Activated CD4-positive, alpha-beta memory T cell treated with anti-CD3 and anti-CD28 coated beads for 36 hours (primary cell): ENCODE measurements at regions of chr2 and their contacts with region 1.

Region 1: GRCh38 chr2:96344011-96344410 is 8.4 kb downstream of the NCAPH start:
- DNase-seq: peak; percentile 77
- H3K4me3 Mint-ChIP-seq: no peak overlapping the region
- H3K27ac Mint-ChIP-seq: peak overlapping the region; percentile 87
- H3K4me1 Mint-ChIP-seq: peaks cover 67% of the 10 kb centered on the region
- H3K27me3 Mint-ChIP-seq: no peaks in the 10 kb centered on the region

Region 2: GRCh38 chr2:96164459-96165184 is 179.4 kb before region 1 on chr2:
- CTCF ChIA-PET with region 1: no interaction called
- POLR2A ChIA-PET with region 1: no interaction called
- intact Hi-C with region 1: loop called (anchors 5 kb)
- DNase-seq: peak; percentile 90
- H3K4me3 Mint-ChIP-seq: peak overlapping the region; percentile 87
- H3K27ac Mint-ChIP-seq: peak overlapping the region; percentile 100
- H3K4me1 Mint-ChIP-seq: peaks cover 72% of the 10 kb centered on the region
- H3K27me3 Mint-ChIP-seq: no peaks in the 10 kb centered on the region

Region 3: GRCh38 chr2:96208143-96209010 is 135.6 kb before region 1 on chr2 and contains the start of gene STARD7:
- CTCF ChIA-PET with region 1: no interaction called
- POLR2A ChIA-PET with region 1: interaction called, 4 read pairs
- intact Hi-C with region 1: loop called (anchors 5 kb)
- DNase-seq: peak; percentile 99
- H3K4me3 Mint-ChIP-seq: peak within 1 kb of the TSS; percentile 98
- H3K27ac Mint-ChIP-seq: peak within 1 kb of the TSS; percentile 92
- H3K4me1 Mint-ChIP-seq: peaks cover 53% of the 10 kb centered on the region
- H3K27me3 Mint-ChIP-seq: no peaks in the 10 kb centered on the region
- total RNA-seq, gene STARD7: 173 to 181 TPM

Region 4: GRCh38 chr2:96305091-96305978 is 38.7 kb before region 1 on chr2 and contains the start of gene SNRNP200:
- CTCF ChIA-PET with region 1: interaction called, 8 read pairs
- POLR2A ChIA-PET with region 1: interaction called, 5 read pairs
- intact Hi-C with region 1: loop called (anchors 1 kb)
- DNase-seq: peak; percentile 94
- H3K4me3 Mint-ChIP-seq: peak within 1 kb of the TSS; percentile 99
- H3K27ac Mint-ChIP-seq: peak within 1 kb of the TSS; percentile 97
- H3K4me1 Mint-ChIP-seq: peaks cover 47% of the 10 kb centered on the region
- H3K27me3 Mint-ChIP-seq: no peaks in the 10 kb centered on the region
- total RNA-seq, gene SNRNP200: 165 to 175 TPM

Region 5: DNA sequence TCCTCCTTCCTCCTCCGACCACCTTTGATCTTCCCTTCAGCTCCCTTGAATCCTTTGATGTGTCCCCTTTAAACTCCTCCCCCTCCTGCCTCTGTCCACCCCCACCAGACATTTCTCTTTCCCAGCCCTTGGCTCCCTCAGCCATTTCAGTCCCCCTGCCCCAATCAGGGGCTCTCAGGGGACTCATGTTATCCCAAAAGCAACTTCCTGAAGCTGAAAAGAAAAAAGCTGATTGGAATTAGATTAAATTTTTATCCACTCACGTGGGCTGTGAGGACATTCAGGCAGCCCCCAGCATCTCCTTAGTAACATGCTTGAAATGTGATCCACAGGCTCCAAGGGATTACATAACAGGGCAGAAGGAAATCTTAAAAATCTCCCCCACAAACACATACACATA is 79.8 kb after region 1 on chr2:
- CTCF ChIA-PET with region 1: no interaction called
- POLR2A ChIA-PET with region 1: no interaction called
- intact Hi-C with region 1: no loop called
- DNase-seq: no peak
- H3K4me3 Mint-ChIP-seq: no peak overlapping the region
- H3K27ac Mint-ChIP-seq: no peak overlapping the region
- H3K4me1 Mint-ChIP-seq: peaks cover 10% of the 10 kb centered on the region
- H3K27me3 Mint-ChIP-seq: peaks cover 13% of the 10 kb centered on the region

Region 6: GRCh38 chr2:96485751-96486651 is 142.0 kb after region 1 on chr2:
- CTCF ChIA-PET with region 1: no interaction called
- POLR2A ChIA-PET with region 1: no interaction called
- intact Hi-C with region 1: loop called (anchors 5 kb)
- DNase-seq: peak; percentile 93
- H3K4me3 Mint-ChIP-seq: peak overlapping the region; percentile 95
- H3K27ac Mint-ChIP-seq: peak overlapping the region; percentile 99
- H3K4me1 Mint-ChIP-seq: peaks cover 47% of the 10 kb centered on the region
- H3K27me3 Mint-ChIP-seq: no peaks in the 10 kb centered on the region

Region 7: GRCh38 chr2:96527286-96528005 is 183.4 kb after region 1 on chr2:
- CTCF ChIA-PET with region 1: interaction called, 3 read pairs
- POLR2A ChIA-PET with region 1: interaction called, 13 read pairs
- intact Hi-C with region 1: no loop called
- DNase-seq: peak; percentile 89
- H3K4me3 Mint-ChIP-seq: peak overlapping the region; percentile 73
- H3K27ac Mint-ChIP-seq: peak overlapping the region; percentile 98
- H3K4me1 Mint-ChIP-seq: peaks cover 96% of the 10 kb centered on the region
- H3K27me3 Mint-ChIP-seq: no peaks in the 10 kb centered on the region

Region 8: GRCh38 chr2:96584017-96584416 is 240.0 kb after region 1 on chr2:
- CTCF ChIA-PET with region 1: no interaction called
- POLR2A ChIA-PET with region 1: no interaction called
- intact Hi-C with region 1: no loop called
- DNase-seq: no peak
- H3K4me3 Mint-ChIP-seq: no peak overlapping the region
- H3K27ac Mint-ChIP-seq: no peak overlapping the region
- H3K4me1 Mint-ChIP-seq: peaks cover 8% of the 10 kb centered on the region
- H3K27me3 Mint-ChIP-seq: no peaks in the 10 kb centered on the region

Region 9: GRCh38 chr2:96625571-96626552 is 281.9 kb after region 1 on chr2:
- CTCF ChIA-PET with region 1: no interaction called
- POLR2A ChIA-PET with region 1: no interaction called
- intact Hi-C with region 1: no loop called
- DNase-seq: no peak
- H3K4me3 Mint-ChIP-seq: no peak overlapping the region
- H3K27ac Mint-ChIP-seq: no peak overlapping the region
- H3K4me1 Mint-ChIP-seq: peaks cover 13% of the 10 kb centered on the region
- H3K27me3 Mint-ChIP-seq: no peaks in the 10 kb centered on the region

Region 10: GRCh38 chr2:96739633-96740428 is 395.8 kb after region 1 on chr2 and contains the start of gene LMAN2L:
- CTCF ChIA-PET with region 1: no interaction called
- POLR2A ChIA-PET with region 1: no interaction called
- intact Hi-C with region 1: no loop called
- DNase-seq: peak; percentile 99
- H3K4me3 Mint-ChIP-seq: peak within 1 kb of the TSS; percentile 92
- H3K27ac Mint-ChIP-seq: peak within 1 kb of the TSS; percentile 52
- H3K4me1 Mint-ChIP-seq: peaks cover 35% of the 10 kb centered on the region
- H3K27me3 Mint-ChIP-seq: no peaks in the 10 kb centered on the region
- total RNA-seq, gene LMAN2L: 5.7 to 6.1 TPM